ENCODE measurements at regions of chr1 and their contacts with region 1.

Region 1: GRCh38 chr1:208652296-208653160 is 408.3 kb upstream of the PLXNA2 start:
- DNase-seq: peak in 5 of 9 donors; percentile 8 to 26 (median 17)
- ATAC-seq: peak; percentile 54
- H3K4me3 ChIP-seq: no peak overlapping the region
- H3K4me3 Mint-ChIP-seq: no peak overlapping the region
- H3K27ac ChIP-seq: no peak overlapping the region
- H3K27ac Mint-ChIP-seq: no peak overlapping the region
- H3K4me1 ChIP-seq: no peaks in the 10 kb centered on the region
- H3K4me1 Mint-ChIP-seq: no peaks in the 10 kb centered on the region
- H3K27me3 ChIP-seq: peaks cover 0 to 13% of the 10 kb centered on the region in 2 donors
- H3K27me3 Mint-ChIP-seq: peaks cover 5 to 47% (median 30%) of the 10 kb centered on the region in 5 donors

Region 2: GRCh38 chr1:208628022-208628914 is 24.3 kb before region 1 on chr1:
- CTCF ChIA-PET with region 1: no interaction called
- POLR2A ChIA-PET with region 1: no interaction called
- intact Hi-C with region 1: no loop called
- DNase-seq: no peak
- ATAC-seq: no peak
- H3K4me3 ChIP-seq: no peak overlapping the region
- H3K4me3 Mint-ChIP-seq: no peak overlapping the region
- H3K27ac ChIP-seq: no peak overlapping the region
- H3K27ac Mint-ChIP-seq: no peak overlapping the region
- H3K4me1 ChIP-seq: no peaks in the 10 kb centered on the region
- H3K4me1 Mint-ChIP-seq: no peaks in the 10 kb centered on the region
- H3K27me3 ChIP-seq: no peaks in the 10 kb centered on the region
- H3K27me3 Mint-ChIP-seq: peaks cover 0 to 10% (median 0%) of the 10 kb centered on the region in 5 donors

Region 3: GRCh38 chr1:208997726-208998312 is 345.3 kb after region 1 on chr1:
- CTCF ChIA-PET with region 1: no interaction called
- POLR2A ChIA-PET with region 1: no interaction called
- intact Hi-C with region 1: loop called in 1 of 2 experiments (anchors 2 kb)
- DNase-seq: no peak
- ATAC-seq: no peak
- H3K4me3 ChIP-seq: no peak overlapping the region
- H3K4me3 Mint-ChIP-seq: no peak overlapping the region
- H3K27ac ChIP-seq: no peak overlapping the region
- H3K27ac Mint-ChIP-seq: no peak overlapping the region
- H3K4me1 ChIP-seq: no peaks in the 10 kb centered on the region
- H3K4me1 Mint-ChIP-seq: no peaks in the 10 kb centered on the region
- H3K27me3 ChIP-seq: no peaks in the 10 kb centered on the region
- H3K27me3 Mint-ChIP-seq: peaks cover 0 to 29% (median 0%) of the 10 kb centered on the region in 5 donors

Region 4: GRCh38 chr1:209190591-209191261 is 538.2 kb after region 1 on chr1:
- CTCF ChIA-PET with region 1: interaction called, 4 read pairs
- POLR2A ChIA-PET with region 1: no interaction called
- intact Hi-C with region 1: loop called in 1 of 2 experiments (anchors 5 kb)
- DNase-seq: no peak
- ATAC-seq: no peak
- H3K4me3 ChIP-seq: no peak overlapping the region
- H3K4me3 Mint-ChIP-seq: no peak overlapping the region
- H3K27ac ChIP-seq: no peak overlapping the region
- H3K27ac Mint-ChIP-seq: no peak overlapping the region
- H3K4me1 ChIP-seq: no peaks in the 10 kb centered on the region
- H3K4me1 Mint-ChIP-seq: no peaks in the 10 kb centered on the region
- H3K27me3 ChIP-seq: no peaks in the 10 kb centered on the region
- H3K27me3 Mint-ChIP-seq: peaks cover 4 to 35% (median 8%) of the 10 kb centered on the region in 5 donors

Region 5: DNA sequence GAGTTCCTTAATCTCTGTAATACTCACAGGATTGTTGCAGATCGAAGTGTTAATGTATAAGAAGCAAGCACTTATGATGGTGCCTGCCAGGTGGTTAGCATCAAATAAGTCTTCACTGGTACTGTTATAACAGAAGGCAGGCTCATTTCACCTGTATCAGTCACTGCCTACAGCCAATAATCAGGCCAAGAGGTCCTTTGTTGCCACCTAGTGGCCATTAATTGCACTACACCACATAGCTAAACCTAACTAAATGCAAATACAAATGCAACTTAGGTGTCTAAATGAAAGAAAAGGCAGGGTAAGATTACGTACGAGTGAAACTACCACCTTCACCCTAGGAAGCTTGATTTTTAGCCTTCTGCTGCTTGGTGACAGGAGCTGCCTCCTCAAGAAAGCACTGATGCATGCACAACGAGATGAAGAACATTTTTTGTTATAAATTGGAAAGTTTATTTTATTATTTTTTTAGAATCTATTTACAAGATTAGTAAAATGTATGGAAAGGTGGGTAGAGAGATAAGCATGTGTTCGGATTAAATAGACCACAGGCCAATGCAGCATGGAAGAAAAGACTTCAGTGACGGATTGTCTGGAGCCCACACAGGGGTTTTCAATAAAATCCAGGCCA is 596.2 kb after region 1 on chr1:
- CTCF ChIA-PET with region 1: interaction called, 6 read pairs
- POLR2A ChIA-PET with region 1: no interaction called
- intact Hi-C with region 1: loop called in 1 of 2 experiments (anchors 1 kb)
- DNase-seq: peak in 7 of 9 donors; percentile 4 to 37 (median 27)
- ATAC-seq: peak; percentile 62
- H3K4me3 ChIP-seq: no peak overlapping the region
- H3K4me3 Mint-ChIP-seq: no peak overlapping the region
- H3K27ac ChIP-seq: no peak overlapping the region
- H3K27ac Mint-ChIP-seq: no peak overlapping the region
- H3K4me1 ChIP-seq: no peaks in the 10 kb centered on the region
- H3K4me1 Mint-ChIP-seq: no peaks in the 10 kb centered on the region
- H3K27me3 ChIP-seq: no peaks in the 10 kb centered on the region
- H3K27me3 Mint-ChIP-seq: peaks cover 0 to 7% (median 6%) of the 10 kb centered on the region in 5 donors

Region 6: GRCh38 chr1:209354111-209354839 is 701.7 kb after region 1 on chr1:
- CTCF ChIA-PET with region 1: no interaction called
- POLR2A ChIA-PET with region 1: no interaction called
- intact Hi-C with region 1: loop called (anchors 2 to 10 kb)
- DNase-seq: peak in 7 of 9 donors; percentile 7 to 31 (median 13)
- ATAC-seq: peak; percentile 70
- H3K4me3 ChIP-seq: no peak overlapping the region
- H3K4me3 Mint-ChIP-seq: no peak overlapping the region
- H3K27ac ChIP-seq: no peak overlapping the region
- H3K27ac Mint-ChIP-seq: no peak overlapping the region
- H3K4me1 ChIP-seq: no peaks in the 10 kb centered on the region
- H3K4me1 Mint-ChIP-seq: peaks cover 0 to 5% (median 2%) of the 10 kb centered on the region in 7 donors
- H3K27me3 ChIP-seq: no peaks in the 10 kb centered on the region
- H3K27me3 Mint-ChIP-seq: peaks cover 0 to 9% (median 5%) of the 10 kb centered on the region in 5 donors

Measured in naive thymus-derived CD4-positive, alpha-beta T cell (primary cell).